ENCODE measurements at regions of chr6 and their contacts with region 1.

Region 1: GRCh38 chr6:28474441-28475219 is 31.3 kb upstream of the ZSCAN23 start:
- DNase-seq: peak; percentile 88
- ATAC-seq: peak; percentile 93
- H3K4me3 ChIP-seq: peak overlapping the region; percentile 28 to 44
- H3K27ac ChIP-seq: no peak overlapping the region
- H3K4me1 ChIP-seq: peaks cover 0 to 9% of the 10 kb centered on the region in 2 experiments; a peak in 2 of 4 replicates
- H3K27me3 ChIP-seq: no peaks in the 10 kb centered on the region
- CTCF ChIP-seq: no peak
- POLR2A ChIP-seq: no peak
- RAD21 ChIP-seq: peak; percentile 23; the same call in 1 of the 2 replicates

Region 2: DNA sequence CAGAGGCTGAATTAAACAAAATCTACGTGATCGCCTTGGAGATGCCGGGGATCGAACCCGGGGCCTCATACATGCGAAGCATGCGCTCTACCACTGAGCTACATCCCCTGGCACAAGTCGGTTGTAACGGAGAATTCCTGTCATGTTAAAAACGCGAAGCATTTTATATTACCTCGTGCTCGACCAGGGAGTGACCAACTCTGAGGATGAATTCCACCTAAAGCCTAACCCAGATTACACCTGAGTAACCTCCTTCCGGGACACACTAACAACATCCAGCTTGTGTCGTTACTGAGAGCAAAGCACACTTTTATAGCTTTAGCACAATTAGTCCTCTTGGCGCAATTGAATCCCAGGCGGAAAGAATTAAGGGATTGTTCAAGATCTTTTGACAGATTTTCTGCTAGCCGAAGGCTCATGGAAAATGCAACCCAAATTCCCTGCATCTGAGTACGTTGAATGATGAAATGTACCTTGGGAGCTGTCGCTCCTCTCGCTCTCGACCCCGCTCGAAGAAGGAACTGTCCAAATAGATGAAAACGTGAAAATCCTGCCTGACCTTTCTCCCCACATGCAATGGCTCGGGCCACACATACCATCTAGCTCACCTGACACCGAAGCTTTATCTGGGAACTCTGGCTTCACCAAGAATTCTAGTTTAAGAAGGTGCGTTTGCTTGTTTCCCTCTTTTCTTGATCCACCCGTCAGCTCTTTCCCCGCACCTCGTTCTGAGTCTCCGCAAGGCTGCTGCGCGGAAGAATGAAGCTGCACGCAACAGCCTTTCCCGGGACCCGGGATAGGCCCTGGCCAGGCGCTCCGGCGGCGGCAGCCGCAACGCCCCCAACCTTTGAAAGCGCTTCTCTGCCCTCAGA is 199.4 kb after region 1 on chr6:
- CTCF ChIA-PET with region 1: no interaction called
- POLR2A ChIA-PET with region 1: no interaction called
- RAD21 ChIA-PET with region 1: no interaction called
- intact Hi-C with region 1: loop called (anchors 5 kb)
- DNase-seq: peak; percentile 66
- ATAC-seq: peak; percentile 94
- H3K4me3 ChIP-seq: no peak overlapping the region
- H3K27ac ChIP-seq: no peak overlapping the region
- H3K4me1 ChIP-seq: peaks cover 0 to 6% of the 10 kb centered on the region in 2 experiments; a peak in 2 of 4 replicates
- H3K27me3 ChIP-seq: no peaks in the 10 kb centered on the region
- CTCF ChIP-seq: no peak
- POLR2A ChIP-seq: no peak
- RAD21 ChIP-seq: no peak

Measured in HCT116 (cell line).